A549 (cell line): ENCODE measurements at regions of chr1 and their contacts with region 1.

Region 1: DNA sequence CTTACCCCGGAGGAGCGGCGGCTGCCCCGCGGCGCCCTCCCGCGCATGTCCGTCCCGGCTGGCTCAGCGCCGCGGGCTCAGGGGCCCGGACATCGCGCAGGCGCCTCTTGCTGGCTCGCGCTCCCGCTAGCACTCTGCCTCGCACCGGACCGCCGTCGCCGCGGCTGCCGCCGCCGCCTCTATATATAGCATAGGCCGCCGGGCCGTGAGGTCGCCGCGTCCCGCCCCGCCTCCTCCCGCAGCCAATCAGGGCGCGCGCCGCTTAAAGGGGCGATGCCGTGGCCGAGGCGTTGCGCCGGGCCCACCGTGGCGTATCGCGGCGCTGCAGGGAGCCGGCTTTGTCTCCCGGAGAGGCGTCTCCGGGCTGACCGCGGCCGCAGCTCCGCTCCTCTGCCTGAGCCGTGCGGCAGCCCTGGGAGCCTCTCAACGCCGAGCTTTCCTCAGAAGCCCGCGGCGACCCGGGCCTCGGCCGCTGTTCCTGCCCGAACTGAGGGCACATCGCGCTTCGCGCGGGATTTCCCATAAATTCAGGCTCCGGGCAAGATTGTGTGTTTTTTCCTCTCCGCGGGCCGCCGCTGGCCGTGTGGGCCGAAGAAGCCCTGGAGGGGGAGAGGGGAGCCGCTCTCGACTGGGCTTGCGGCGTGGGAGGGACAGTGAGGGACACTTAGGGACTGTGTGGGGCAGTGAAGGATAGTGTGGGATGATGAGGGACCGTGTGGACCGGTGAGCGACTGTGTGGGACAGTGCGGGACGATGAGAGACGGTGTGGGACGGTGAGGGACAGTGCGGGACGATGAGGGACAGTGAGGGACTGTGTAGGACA is at the start of gene ERRFI1:
- DNase-seq: peak; percentile 55 to 94
- ATAC-seq: peak; percentile 75 to 76
- H3K4me3 ChIP-seq: peak within 1 kb of the TSS; percentile 91
- H3K27ac ChIP-seq: peak within 1 kb of the TSS; percentile 98 to 100
- H3K4me1 ChIP-seq: peaks cover 28% of the 10 kb centered on the region
- CTCF ChIP-seq: no peak
- EP300 ChIP-seq: no peak
- POLR2A ChIP-seq: peak; percentile 97
- RAD21 ChIP-seq: no peak
- polyA plus RNA-seq, gene ERRFI1: 193 and 217 TPM in 2 replicates

Region 2: GRCh38 chr1:7930645-7931445 is 95.5 kb before region 1 on chr1:
- CTCF ChIA-PET with region 1: no interaction called
- POLR2A ChIA-PET with region 1: no interaction called
- DNase-seq: no peak
- ATAC-seq: no peak
- H3K4me3 ChIP-seq: no peak overlapping the region
- H3K27ac ChIP-seq: no peak overlapping the region
- H3K4me1 ChIP-seq: no peaks in the 10 kb centered on the region
- CTCF ChIP-seq: no peak
- EP300 ChIP-seq: no peak
- POLR2A ChIP-seq: no peak
- RAD21 ChIP-seq: no peak

Region 3: GRCh38 chr1:8147956-8148355 is 121.6 kb after region 1 on chr1:
- CTCF ChIA-PET with region 1: no interaction called
- POLR2A ChIA-PET with region 1: no interaction called
- DNase-seq: no peak
- ATAC-seq: no peak
- H3K4me3 ChIP-seq: no peak overlapping the region
- H3K27ac ChIP-seq: peak overlapping the region; percentile 12 to 64; a peak in 4 of 6 replicates
- H3K4me1 ChIP-seq: no peaks in the 10 kb centered on the region
- CTCF ChIP-seq: no peak
- EP300 ChIP-seq: no peak
- POLR2A ChIP-seq: no peak
- RAD21 ChIP-seq: no peak

Region 4: DNA sequence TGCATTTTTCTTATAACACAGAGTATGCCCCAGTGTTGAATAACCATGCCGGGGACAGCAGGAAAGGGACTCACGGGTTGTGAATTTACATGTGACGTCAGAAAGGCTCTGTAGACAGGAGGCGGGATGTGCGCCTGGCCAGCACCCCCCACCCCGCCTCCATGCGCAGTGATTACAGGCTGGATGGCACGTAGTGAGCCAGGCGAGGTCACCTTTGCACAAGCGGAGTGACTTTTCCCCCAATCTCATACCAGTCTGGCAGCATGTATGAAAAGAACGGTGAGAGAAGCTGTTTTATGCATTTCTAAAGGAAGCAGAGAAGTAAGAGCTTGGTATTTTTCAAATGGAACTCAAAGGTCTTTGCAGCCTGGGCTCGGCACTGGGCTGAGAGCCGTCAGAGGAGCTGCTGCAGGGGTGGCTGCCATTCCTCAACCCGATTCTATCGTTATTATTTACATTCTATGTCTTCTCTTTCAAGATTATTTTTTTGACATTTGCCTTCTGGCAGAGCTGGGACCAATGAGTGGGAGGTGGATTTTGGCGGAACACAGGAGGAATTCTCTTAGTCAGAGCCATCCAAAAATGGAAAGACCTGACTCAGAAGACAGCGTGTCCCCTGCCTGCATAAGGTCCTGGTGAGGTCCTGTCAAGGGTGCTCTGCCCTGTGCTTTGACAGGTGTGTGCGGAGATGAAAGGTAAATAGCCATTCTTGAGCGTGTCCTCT is 176.0 kb after region 1 on chr1:
- CTCF ChIA-PET with region 1: interaction called, 11 read pairs
- POLR2A ChIA-PET with region 1: interaction called, 4 read pairs
- DNase-seq: peak; percentile 78 to 90
- ATAC-seq: peak; percentile 79 to 92
- H3K4me3 ChIP-seq: peak overlapping the region; percentile 17; the same call in 2 of the 3 replicates
- H3K27ac ChIP-seq: peak overlapping the region; percentile 95 to 98
- H3K4me1 ChIP-seq: peaks cover 63% of the 10 kb centered on the region
- CTCF ChIP-seq: no peak
- EP300 ChIP-seq: peak in 1 of 2 experiments; percentile 31; a peak in 1 of 5 replicates
- POLR2A ChIP-seq: no peak
- RAD21 ChIP-seq: peak; percentile 8 to 48; a peak in 3 of 5 replicates